ENCODE measurements at regions of chr10 and their contacts with region 1.

Region 1: GRCh38 chr10:3248888-3249758 is 76.5 kb upstream of the PITRM1 start:
- DNase-seq: peak; percentile 80
- H3K4me3 Mint-ChIP-seq: no peak overlapping the region
- H3K27ac Mint-ChIP-seq: peak overlapping the region; percentile 87
- H3K4me1 Mint-ChIP-seq: peaks cover 7% of the 10 kb centered on the region
- H3K27me3 Mint-ChIP-seq: peaks cover 17% of the 10 kb centered on the region
- CTCF ChIP-seq: no peak

Region 2: DNA sequence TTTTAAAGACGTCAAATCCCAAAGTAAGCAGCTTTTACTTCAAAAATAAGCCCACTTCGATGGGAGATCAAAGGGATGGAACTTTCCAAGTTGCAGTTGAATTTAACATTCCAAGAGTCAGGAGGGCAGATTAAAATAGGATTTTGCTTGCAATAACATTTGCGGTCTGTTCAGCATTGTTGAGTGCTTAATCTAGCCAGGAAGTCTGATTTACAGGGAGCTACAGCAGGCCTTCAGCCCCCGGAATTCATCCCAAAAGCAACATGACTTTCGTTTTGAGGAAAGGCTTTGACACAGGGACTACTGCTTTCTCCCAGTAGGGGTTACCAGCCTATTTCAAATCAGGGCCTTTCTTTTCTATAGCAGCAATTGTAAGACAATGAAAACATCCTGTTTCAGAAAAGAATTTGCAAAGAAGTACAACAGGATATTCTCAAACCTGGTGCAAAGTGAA is 203.1 kb after region 1 on chr10:
- CTCF ChIA-PET with region 1: no interaction called
- POLR2A ChIA-PET with region 1: interaction called, 3 read pairs
- intact Hi-C with region 1: loop called (anchors 5 kb)
- DNase-seq: peak; percentile 70
- H3K4me3 Mint-ChIP-seq: peak overlapping the region; percentile 18
- H3K27ac Mint-ChIP-seq: peak overlapping the region; percentile 78
- H3K4me1 Mint-ChIP-seq: peaks cover 34% of the 10 kb centered on the region
- H3K27me3 Mint-ChIP-seq: no peaks in the 10 kb centered on the region
- CTCF ChIP-seq: peak; percentile 20

Measured in MCF 10A (cell line).